ENCODE measurements at regions of chr13 and their contacts with region 1.

Region 1: DNA sequence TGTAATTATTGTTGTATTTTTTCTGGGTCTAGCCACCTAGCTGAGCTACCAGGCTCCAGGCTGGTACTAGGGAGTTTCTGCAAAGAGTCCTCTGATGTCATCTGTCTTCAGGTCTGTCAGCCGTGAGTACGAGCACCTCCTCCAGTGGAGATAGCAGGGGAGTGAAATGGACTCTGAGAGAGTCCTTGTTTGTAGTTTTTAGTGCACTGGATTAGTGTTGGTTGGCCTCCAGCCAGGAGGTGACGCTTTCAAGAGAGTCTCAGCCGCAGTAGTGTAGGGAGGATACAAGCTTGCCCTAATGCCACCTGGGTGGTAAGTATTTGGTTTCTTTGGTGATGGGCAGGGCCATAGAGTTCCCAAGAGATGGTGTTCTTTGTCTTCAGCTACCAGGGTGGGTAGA is 384.8 kb downstream of the SLC7A1 start:
- DNase-seq: peak; percentile 18
- H3K4me3 ChIP-seq: no peak overlapping the region
- H3K27ac ChIP-seq: no peak overlapping the region
- H3K4me1 ChIP-seq: no peaks in the 10 kb centered on the region
- H3K27me3 ChIP-seq: no peaks in the 10 kb centered on the region
- CTCF ChIP-seq: no peak

Region 2: GRCh38 chr13:29319451-29319850 is 108.8 kb after region 1 on chr13:
- CTCF ChIA-PET with region 1: no interaction called
- POLR2A ChIA-PET with region 1: no interaction called
- intact Hi-C with region 1: no loop called
- DNase-seq: no peak
- H3K4me3 ChIP-seq: no peak overlapping the region
- H3K27ac ChIP-seq: no peak overlapping the region
- H3K4me1 ChIP-seq: no peaks in the 10 kb centered on the region
- H3K27me3 ChIP-seq: peaks cover 15% of the 10 kb centered on the region
- CTCF ChIP-seq: no peak

Region 3: GRCh38 chr13:29354377-29354776 is 143.7 kb after region 1 on chr13:
- CTCF ChIA-PET with region 1: no interaction called
- POLR2A ChIA-PET with region 1: no interaction called
- intact Hi-C with region 1: loop called (anchors 2 kb)
- DNase-seq: no peak
- H3K4me3 ChIP-seq: no peak overlapping the region
- H3K27ac ChIP-seq: no peak overlapping the region
- H3K4me1 ChIP-seq: no peaks in the 10 kb centered on the region
- H3K27me3 ChIP-seq: peaks cover 34% of the 10 kb centered on the region
- CTCF ChIP-seq: no peak